MCF 10A (cell line): ENCODE measurements at regions of chr4 and their contacts with region 1.

Region 1: DNA sequence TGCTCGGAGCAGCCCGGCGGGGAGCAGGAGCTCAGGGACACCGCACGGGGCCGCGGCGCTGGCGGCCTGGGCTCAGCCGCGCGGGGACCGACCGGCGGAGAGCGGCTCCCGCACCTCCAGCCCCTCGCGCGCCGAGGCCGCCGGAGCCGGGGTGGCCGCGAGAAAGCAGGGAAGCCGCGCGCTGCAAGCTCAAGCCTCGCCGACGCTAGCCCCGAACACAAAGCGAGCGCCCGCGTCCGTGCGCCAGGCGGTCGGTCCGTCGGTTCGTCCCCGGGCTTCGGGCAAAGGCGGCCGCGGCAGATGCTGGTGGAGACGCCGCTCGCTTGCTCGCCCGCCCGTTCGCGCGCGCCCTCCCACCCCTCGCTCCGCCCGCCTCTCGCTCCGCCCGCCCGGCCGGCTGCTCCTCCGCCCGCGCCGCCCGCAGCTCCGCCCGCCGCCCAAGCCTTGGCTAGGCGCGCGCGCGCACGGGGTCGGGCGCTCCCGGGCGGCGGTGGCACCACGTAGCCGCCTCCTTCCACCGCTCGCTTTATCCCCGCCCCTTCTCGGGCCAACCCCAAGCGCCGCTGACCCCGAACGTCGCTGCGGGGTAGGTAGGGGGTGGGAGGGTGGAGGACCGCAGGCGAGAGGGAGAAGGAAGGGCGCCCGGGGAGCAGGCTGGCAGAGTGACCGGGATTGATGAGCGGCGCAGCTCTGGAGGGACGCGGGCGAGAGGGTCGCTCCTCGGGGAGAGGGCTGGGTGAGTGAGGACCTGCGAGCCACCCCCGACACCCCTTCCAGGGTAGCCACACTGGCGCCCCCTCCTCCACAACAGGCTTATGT is at the start of gene TSPAN5:
- DNase-seq: peak; percentile 74
- H3K4me3 Mint-ChIP-seq: peak within 1 kb of the TSS; percentile 81
- H3K27ac Mint-ChIP-seq: no peak within 1 kb of the TSS
- H3K4me1 Mint-ChIP-seq: peaks cover 50% of the 10 kb centered on the region
- H3K27me3 Mint-ChIP-seq: no peaks in the 10 kb centered on the region
- CTCF ChIP-seq: no peak
- total RNA-seq, gene TSPAN5: 18.5 and 19.8 TPM in 2 replicates

Region 2: GRCh38 chr4:98482847-98483806 is 175.4 kb before region 1 on chr4:
- CTCF ChIA-PET with region 1: no interaction called
- POLR2A ChIA-PET with region 1: no interaction called
- intact Hi-C with region 1: loop called (anchors 5 kb)
- DNase-seq: peak; percentile 45
- H3K4me3 Mint-ChIP-seq: peak overlapping the region; percentile 51
- H3K27ac Mint-ChIP-seq: peak overlapping the region; percentile 95
- H3K4me1 Mint-ChIP-seq: peaks cover 28% of the 10 kb centered on the region
- H3K27me3 Mint-ChIP-seq: no peaks in the 10 kb centered on the region
- CTCF ChIP-seq: no peak

Region 3: GRCh38 chr4:98642991-98643426 is 15.5 kb before region 1 on chr4:
- CTCF ChIA-PET with region 1: interaction called, 5 read pairs
- POLR2A ChIA-PET with region 1: interaction called, 19 read pairs
- intact Hi-C with region 1: no loop called
- DNase-seq: peak; percentile 87
- H3K4me3 Mint-ChIP-seq: no peak overlapping the region
- H3K27ac Mint-ChIP-seq: peak overlapping the region; percentile 35
- H3K4me1 Mint-ChIP-seq: peaks cover 8% of the 10 kb centered on the region
- H3K27me3 Mint-ChIP-seq: no peaks in the 10 kb centered on the region
- CTCF ChIP-seq: no peak